Motor neuron (in vitro differentiated cells): ENCODE measurements at regions of chr5 and their contacts with region 1.

Region 1: GRCh38 chr5:148730943-148731861 is 76.9 kb upstream of the HTR4 start:
- ATAC-seq: peak; percentile 77 to 91 (median 86)
- H3K4me3 ChIP-seq: no peak overlapping the region
- H3K27ac ChIP-seq: no peak overlapping the region
- H3K4me1 ChIP-seq: no peaks in the 10 kb centered on the region

Region 2: GRCh38 chr5:148179234-148179824 is 551.9 kb before region 1 on chr5:
- in situ Hi-C with region 1: loop called in 3 of 9 experiments (anchors 25 kb)
- ATAC-seq: peak in 3 of 8 experiments; percentile 42 to 59 (median 50)
- H3K4me3 ChIP-seq: no peak overlapping the region
- H3K27ac ChIP-seq: no peak overlapping the region
- H3K4me1 ChIP-seq: no peaks in the 10 kb centered on the region

Region 3: GRCh38 chr5:148569948-148570347 is 161.3 kb before region 1 on chr5:
- in situ Hi-C with region 1: no loop called
- ATAC-seq: peak in 3 of 8 experiments; percentile 40 to 73 (median 50)
- H3K4me3 ChIP-seq: no peak overlapping the region
- H3K27ac ChIP-seq: no peak overlapping the region
- H3K4me1 ChIP-seq: no peaks in the 10 kb centered on the region

Region 4: DNA sequence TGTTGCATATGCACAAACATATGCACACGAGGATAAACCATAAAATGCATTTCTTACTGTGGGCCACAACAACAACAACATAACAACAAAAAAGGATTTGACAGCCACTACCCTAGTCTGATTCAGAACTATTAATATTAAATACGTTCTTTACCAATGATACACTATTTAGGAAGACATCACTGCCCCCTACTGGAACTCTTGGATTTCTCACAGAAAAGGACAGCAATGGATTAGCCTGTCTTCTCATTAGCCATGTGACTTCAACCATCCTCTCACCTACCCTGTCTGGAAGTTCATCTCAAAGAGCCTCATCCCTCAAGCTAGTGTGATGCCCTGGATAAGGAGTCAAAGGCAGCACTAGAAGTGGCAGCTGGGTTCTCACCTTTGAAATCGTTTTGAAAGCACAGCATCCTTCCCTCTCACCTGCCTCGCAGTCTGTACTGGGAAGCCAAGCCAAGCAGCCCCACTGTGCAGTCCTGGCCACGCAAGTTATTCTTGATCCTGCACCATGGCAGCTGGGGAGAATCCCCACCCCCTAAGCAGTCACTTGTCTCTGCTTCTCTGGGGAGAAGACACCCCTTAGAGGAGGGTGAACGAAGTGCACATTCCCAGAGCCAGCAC is 267.1 kb after region 1 on chr5:
- in situ Hi-C with region 1: loop called in 1 of 9 experiments (anchors 10 kb)
- ATAC-seq: peak in 4 of 8 experiments; percentile 6 to 28 (median 14)
- H3K4me3 ChIP-seq: no peak overlapping the region
- H3K27ac ChIP-seq: no peak overlapping the region
- H3K4me1 ChIP-seq: no peaks in the 10 kb centered on the region

Region 5: DNA sequence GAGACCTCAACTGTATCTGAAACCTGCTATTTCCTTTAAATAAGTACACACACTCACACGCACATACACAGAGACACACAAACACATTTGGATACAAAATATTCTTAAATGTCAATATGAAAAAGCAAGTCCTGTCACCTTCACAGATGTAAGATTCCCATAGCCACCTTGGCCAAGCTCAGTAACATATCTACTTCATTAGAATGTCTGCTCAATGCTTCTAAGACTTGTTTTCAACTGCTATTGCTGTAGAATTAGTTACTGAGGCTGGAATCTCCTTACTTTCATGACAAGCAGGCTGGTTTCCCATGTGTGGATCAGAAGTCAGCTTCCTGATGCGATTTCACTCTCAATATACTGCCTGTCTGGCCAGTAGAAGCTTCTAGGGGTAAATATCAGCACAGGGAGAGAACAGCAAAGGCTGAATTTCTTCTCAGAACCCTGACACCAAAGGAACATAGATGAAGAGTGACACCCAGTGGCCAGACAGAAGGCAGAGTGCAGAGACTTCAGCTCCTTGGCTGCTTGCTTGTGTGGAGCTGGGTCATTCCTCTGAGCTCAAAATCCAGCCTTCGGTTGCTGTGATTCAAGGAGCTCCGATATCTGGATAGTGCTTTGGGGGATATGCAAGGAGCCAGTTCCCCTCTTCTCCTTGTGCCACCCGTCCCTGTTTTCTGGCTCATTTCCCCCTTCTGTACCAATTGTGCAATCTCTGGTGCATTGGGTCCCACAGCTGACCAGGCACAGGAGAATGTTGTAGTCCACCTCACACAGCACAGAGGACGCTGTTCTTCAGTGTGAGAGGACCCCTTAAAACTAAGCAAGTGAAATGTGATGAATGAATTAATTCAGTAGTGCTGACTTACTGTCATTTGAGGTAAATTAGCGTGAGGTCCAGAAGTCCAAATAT is 383.5 kb after region 1 on chr5:
- in situ Hi-C with region 1: loop called in 5 of 9 experiments (anchors 10 to 25 kb)
- ATAC-seq: peak; percentile 83 to 100 (median 96)
- H3K4me3 ChIP-seq: no peak overlapping the region
- H3K27ac ChIP-seq: no peak overlapping the region
- H3K4me1 ChIP-seq: no peaks in the 10 kb centered on the region

Region 6: DNA sequence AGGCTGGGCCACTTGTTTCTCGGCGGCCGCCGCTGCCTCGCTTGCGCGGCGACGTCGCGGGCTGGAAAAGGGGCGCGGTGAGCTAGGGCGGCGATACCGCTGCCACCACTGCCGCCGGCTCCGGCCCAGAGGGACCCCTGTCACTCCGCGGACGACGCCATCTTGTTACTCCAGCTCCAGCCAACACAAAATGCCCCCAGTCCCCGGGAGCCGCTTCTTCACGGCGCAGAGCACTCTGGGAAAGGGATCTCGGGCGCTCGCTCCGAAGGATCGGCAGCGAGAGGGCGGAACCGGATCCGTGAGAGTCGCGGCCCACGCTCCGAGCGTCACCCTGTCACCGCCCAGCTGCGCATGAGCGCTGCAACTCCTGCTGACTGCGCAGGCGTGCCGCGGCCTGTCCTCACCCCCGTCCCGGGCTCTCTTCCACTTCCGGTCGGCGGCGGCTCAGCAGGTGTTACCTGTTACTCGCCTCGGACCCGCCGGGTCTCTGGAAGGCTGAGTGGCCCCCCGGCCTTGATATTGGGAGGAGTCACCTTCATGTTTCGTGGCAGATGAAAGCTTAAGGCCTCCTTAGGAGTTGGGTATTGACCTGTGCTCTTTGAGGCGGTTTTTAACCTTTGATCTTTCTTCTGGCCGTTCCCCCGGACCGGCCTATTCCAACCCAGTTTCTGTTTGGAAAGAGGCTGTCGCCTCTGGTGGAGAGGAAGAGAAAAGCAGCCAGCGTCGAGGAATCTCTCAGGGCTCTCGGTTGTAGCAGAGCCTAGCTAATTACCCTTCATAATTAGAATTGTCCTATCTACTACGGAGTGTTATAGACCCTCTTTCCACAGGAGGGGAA is 820.2 kb after region 1 on chr5 and contains the start of gene CSNK1A1:
- in situ Hi-C with region 1: loop called in 3 of 9 experiments (anchors 25 kb)
- ATAC-seq: peak; percentile 76 to 93 (median 91)
- H3K4me3 ChIP-seq: peak within 1 kb of the TSS; percentile 57 to 91 (median 67)
- H3K27ac ChIP-seq: peak within 1 kb of the TSS; percentile 96 to 99
- H3K4me1 ChIP-seq: peaks cover 18 to 25% of the 10 kb centered on the region in 2 donors
- total RNA-seq, gene CSNK1A1: 196 to 391 (median 279) TPM